Psoas muscle (tissue), 8 donors: ENCODE measurements at regions of chr22 and their contacts with region 1.

Region 1: GRCh38 chr22:36856121-36856791 is 4.5 kb upstream of the NCF4 start:
- DNase-seq: peak; percentile 91 to 94
- ATAC-seq: peak; percentile 92 to 97 (median 96)
- H3K4me3 ChIP-seq: no peak overlapping the region
- H3K27ac ChIP-seq: no peak overlapping the region
- H3K4me1 ChIP-seq: peaks cover 31% of the 10 kb centered on the region
- H3K27me3 ChIP-seq: peaks cover 0 to 2% (median under 1%) of the 10 kb centered on the region in 3 donors
- CTCF ChIP-seq: peak; percentile 100

Region 2: DNA sequence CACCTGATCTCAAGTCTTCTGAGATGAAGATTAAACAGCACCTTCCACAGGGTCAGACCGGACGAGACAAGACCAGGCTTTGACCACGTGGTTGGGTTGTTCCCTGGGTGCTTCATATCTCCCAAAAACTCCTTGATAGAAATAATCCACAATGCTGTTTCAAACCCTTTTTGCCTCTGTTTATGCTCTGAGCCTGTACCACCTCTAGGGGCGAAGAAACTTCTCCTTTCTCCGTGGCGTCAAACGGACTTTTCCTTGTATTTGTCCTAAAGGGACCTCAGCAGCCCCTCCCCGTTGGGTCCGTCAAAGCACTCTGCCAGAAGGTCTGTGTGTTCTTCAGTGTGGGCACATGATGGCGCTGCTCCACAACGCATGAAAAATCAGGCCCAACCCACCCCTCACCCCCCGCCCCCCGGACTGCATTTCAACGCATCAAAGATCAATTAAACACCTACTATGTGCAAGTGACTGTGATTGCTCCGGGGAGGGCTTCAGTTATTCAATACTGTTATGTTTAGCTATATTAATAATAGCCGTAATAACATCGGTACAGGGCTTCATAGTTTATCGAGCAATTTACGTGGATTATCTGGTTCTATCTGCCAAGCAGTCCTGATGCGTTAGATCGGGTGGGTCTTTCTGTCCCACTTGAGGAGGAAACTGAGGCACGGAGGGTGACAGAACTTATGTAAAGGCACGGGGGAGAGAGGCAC is 310.0 kb before region 1 on chr22:
- intact Hi-C with region 1: loop called in 1 of 2 experiments (anchors 5 kb)
- DNase-seq: peak; percentile 32 to 59
- ATAC-seq: peak in 3 of 4 donors; percentile 72 to 78 (median 72)
- H3K4me3 ChIP-seq: no peak overlapping the region
- H3K27ac ChIP-seq: no peak overlapping the region
- H3K4me1 ChIP-seq: no peaks in the 10 kb centered on the region
- H3K27me3 ChIP-seq: peaks cover 0 to 41% (median 6%) of the 10 kb centered on the region in 3 donors
- CTCF ChIP-seq: peak; percentile 47

Region 3: GRCh38 chr22:36699915-36700314 is 156.3 kb before region 1 on chr22:
- intact Hi-C with region 1: no loop called
- DNase-seq: no peak
- ATAC-seq: no peak
- H3K4me3 ChIP-seq: no peak overlapping the region
- H3K27ac ChIP-seq: no peak overlapping the region
- H3K4me1 ChIP-seq: no peaks in the 10 kb centered on the region
- H3K27me3 ChIP-seq: peaks cover 6 to 70% (median 7%) of the 10 kb centered on the region in 3 donors
- CTCF ChIP-seq: no peak

Region 4: DNA sequence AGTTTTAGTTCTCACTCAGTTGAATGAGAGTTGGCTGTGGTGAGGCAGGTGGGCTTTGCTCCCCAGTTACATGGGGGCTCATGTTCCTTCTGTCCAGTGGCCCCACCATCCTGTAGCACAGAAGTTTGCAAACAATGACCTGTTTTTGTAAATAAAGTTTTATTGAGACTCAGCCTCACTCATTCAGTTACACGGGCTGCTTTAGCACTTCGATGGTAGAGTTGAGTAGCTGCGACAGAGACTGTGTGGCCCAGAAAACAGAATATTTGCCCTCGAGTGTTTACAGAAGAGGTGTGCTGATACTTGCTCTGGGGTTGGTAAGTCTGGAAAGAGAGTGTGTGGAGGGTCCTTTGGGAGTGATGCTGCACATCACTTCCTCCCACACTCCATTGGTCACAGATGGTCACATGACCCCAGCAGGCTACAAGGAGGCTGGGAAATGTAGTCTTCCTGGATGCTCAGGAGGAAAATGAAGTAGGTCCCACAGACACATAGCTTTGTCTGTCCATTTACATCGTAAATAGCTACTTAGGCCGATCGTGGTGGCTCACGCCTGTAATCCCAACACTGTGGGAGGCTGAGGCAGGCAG is 115.0 kb before region 1 on chr22:
- intact Hi-C with region 1: no loop called
- DNase-seq: no peak
- ATAC-seq: no peak
- H3K4me3 ChIP-seq: no peak overlapping the region
- H3K27ac ChIP-seq: no peak overlapping the region
- H3K4me1 ChIP-seq: no peaks in the 10 kb centered on the region
- H3K27me3 ChIP-seq: peaks cover 0 to 20% (median 8%) of the 10 kb centered on the region in 3 donors
- CTCF ChIP-seq: no peak

Region 5: DNA sequence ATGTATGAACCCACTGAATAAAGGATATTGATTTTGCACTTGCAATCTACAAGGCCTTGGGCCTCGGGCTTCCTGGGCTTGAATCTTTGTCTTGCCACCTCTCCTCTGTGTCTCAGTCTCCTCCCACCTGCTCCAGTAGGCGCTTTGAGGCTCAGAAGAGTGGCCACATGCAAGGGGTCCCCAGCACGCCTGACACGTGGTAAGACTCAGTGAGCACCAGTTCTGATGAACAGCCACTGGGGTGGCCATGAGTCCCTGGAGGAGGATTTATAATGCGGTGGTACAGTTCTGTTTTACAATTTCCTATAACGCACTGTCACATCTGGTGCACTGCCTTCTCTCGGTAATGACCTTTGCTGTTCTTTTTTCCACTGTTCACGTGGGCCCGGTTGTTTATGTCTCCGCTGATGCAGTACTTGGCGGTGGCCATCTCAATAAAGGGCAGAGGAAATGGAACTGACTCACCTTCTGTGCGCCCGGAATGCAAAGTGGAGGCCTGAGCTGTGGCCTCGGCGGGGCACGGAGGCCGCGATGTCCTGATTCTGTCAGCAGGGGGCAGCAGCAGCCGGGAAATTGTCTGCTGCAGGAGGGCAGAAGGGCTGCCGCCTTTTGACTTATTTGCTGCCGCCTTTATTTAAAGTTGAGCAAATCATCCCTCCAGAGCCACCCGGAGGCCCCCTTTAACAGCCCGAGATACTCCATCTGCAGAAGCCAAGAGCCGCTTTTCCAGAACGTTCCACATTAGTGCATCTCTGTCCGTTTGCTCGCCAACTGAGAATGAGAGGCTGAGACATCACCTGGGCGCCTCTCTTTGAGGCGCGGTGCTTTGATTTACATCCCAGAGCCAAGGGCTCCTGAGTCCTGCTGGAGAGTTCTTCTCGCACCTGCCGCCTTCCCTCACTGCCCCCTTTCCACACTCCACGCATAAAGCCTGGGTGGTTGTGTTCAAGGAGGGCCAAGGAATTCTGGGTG is 74.3 kb before region 1 on chr22:
- intact Hi-C with region 1: loop called (anchors 2 to 5 kb)
- DNase-seq: peak; percentile 74 to 87
- ATAC-seq: peak; percentile 88 to 96 (median 92)
- H3K4me3 ChIP-seq: no peak overlapping the region
- H3K27ac ChIP-seq: no peak overlapping the region
- H3K4me1 ChIP-seq: no peaks in the 10 kb centered on the region
- H3K27me3 ChIP-seq: peaks cover 0 to 26% (median 5%) of the 10 kb centered on the region in 3 donors
- CTCF ChIP-seq: peak; percentile 93